Heart left ventricle (tissue), 16 donors: ENCODE measurements at regions of chr20 and their contacts with region 1.

Region 1: GRCh38 chr20:46752728-46753127 is 43.3 kb downstream of the SLC2A10 start:
- DNase-seq: peak in 3 of 5 donors; percentile 17 to 44 (median 34)
- ATAC-seq: peak in 1 of 4 donors; percentile 45
- H3K4me3 ChIP-seq: peak overlapping the region in 2 of 12 donors; percentile 18 to 20
- H3K27ac ChIP-seq: no peak overlapping the region
- H3K4me1 ChIP-seq: peaks cover 0 to 4% (median 0%) of the 10 kb centered on the region in 12 donors
- H3K27me3 ChIP-seq: peaks cover 0 to 10% (median 0%) of the 10 kb centered on the region in 9 donors
- CTCF ChIP-seq: peak; percentile 59 to 83 (median 71)
- POLR2A ChIP-seq: no peak

Region 2: GRCh38 chr20:47150403-47151152 is 397.9 kb after region 1 on chr20:
- intact Hi-C with region 1: loop called in 8 of 10 experiments (anchors 1 to 5 kb)
- DNase-seq: peak in 4 of 5 donors; percentile 45 to 62 (median 57)
- ATAC-seq: peak; percentile 87 to 95 (median 94)
- H3K4me3 ChIP-seq: no peak overlapping the region
- H3K27ac ChIP-seq: no peak overlapping the region
- H3K4me1 ChIP-seq: peaks cover 0 to 6% (median 0%) of the 10 kb centered on the region in 12 donors
- H3K27me3 ChIP-seq: peaks cover 0 to 15% (median 0%) of the 10 kb centered on the region in 9 donors
- CTCF ChIP-seq: peak; percentile 43 to 73 (median 52)
- POLR2A ChIP-seq: no peak